Activated CD8-positive, alpha-beta memory T cell treated with anti-CD3 and anti-CD28 coated beads, Interleukin-2, amount 10 ng/mL, durations not matched to agents 7 days and 5 days (primary cell): ENCODE measurements at regions of chr6 and their contacts with region 1.

Region 1: DNA sequence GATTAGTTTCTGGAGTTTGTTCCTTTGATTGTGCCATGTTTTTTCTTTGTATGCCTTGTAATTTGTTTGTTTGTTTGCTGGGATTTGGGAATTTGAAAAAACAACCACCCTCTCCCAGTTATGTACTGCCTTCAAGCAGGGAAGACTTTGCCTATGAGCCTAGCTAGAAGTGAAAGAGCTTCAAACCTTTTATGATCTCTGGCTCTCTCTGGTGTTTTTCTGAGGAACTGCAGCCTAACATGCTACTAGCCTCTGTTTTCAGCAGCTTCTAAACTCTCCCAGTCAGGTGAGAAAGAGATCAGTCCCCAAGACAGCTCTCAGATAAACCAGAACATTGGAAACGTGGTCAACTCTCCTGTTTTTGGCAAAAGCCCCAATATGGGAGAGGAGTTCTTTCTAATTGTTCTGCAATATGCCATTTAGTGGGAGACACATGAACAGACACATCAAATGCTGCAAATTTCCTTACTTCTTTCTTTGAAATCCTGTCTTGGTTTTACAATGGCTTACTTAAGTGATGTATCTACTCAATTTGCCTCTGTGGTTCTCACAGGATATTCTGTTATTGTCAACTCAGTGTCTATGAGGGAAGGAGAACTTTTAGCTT is 58.9 kb upstream of the SERINC1 start:
- DNase-seq: peak; percentile 57
- ATAC-seq: peak; percentile 67
- H3K4me3 Mint-ChIP-seq: no peak overlapping the region
- H3K27ac Mint-ChIP-seq: no peak overlapping the region
- H3K4me1 Mint-ChIP-seq: no peaks in the 10 kb centered on the region
- H3K27me3 Mint-ChIP-seq: peaks cover 48% of the 10 kb centered on the region

Region 2: GRCh38 chr6:122471107-122472021 is 59.2 kb before region 1 on chr6 and contains the start of gene SERINC1:
- CTCF ChIA-PET with region 1: interaction called, 13 read pairs
- DNase-seq: peak; percentile 95
- ATAC-seq: peak; percentile 99
- H3K4me3 Mint-ChIP-seq: peak within 1 kb of the TSS; percentile 99
- H3K27ac Mint-ChIP-seq: peak within 1 kb of the TSS; percentile 100
- H3K4me1 Mint-ChIP-seq: peaks cover 31% of the 10 kb centered on the region
- H3K27me3 Mint-ChIP-seq: no peaks in the 10 kb centered on the region
- total RNA-seq, gene SERINC1: 37.6 to 52.4 TPM

Region 3: DNA sequence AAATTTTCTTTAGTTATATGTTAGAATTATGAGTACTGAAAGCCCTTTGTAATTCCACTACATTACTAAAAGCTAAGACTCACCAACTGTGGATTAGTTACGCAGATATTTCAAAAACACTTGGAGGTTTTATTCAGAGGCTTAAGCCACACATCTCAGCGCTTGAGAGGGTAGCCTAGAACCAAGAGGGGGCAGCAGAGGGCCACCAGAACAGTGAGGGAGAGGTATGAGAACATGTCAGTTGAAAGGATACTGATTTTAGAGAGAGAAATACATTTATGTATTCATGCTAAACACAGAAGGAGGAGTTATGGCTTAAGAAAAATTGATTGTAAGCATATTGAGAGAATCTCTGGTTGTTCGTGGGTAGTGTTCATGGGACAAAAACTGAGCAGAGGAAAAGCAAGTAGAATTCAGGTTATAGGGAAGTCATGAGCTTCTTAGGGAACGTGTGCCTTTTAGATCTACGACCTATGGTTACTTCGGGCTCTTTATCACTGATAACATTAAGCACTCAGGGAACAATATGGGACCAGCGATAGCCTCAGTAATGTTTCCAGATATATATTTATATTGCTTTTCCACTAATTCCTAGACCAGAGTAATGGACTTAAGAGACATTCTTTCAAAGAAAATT is 38.5 kb before region 1 on chr6:
- CTCF ChIA-PET with region 1: interaction called, 132 read pairs
- DNase-seq: peak; percentile 82
- ATAC-seq: peak; percentile 91
- H3K4me3 Mint-ChIP-seq: no peak overlapping the region
- H3K27ac Mint-ChIP-seq: no peak overlapping the region
- H3K4me1 Mint-ChIP-seq: peaks cover 16% of the 10 kb centered on the region
- H3K27me3 Mint-ChIP-seq: peaks cover under 1% of the 10 kb centered on the region